Ascending aorta (tissue), 2 donors: ENCODE measurements at regions of chr9 and their contacts with region 1.

Region 1: DNA sequence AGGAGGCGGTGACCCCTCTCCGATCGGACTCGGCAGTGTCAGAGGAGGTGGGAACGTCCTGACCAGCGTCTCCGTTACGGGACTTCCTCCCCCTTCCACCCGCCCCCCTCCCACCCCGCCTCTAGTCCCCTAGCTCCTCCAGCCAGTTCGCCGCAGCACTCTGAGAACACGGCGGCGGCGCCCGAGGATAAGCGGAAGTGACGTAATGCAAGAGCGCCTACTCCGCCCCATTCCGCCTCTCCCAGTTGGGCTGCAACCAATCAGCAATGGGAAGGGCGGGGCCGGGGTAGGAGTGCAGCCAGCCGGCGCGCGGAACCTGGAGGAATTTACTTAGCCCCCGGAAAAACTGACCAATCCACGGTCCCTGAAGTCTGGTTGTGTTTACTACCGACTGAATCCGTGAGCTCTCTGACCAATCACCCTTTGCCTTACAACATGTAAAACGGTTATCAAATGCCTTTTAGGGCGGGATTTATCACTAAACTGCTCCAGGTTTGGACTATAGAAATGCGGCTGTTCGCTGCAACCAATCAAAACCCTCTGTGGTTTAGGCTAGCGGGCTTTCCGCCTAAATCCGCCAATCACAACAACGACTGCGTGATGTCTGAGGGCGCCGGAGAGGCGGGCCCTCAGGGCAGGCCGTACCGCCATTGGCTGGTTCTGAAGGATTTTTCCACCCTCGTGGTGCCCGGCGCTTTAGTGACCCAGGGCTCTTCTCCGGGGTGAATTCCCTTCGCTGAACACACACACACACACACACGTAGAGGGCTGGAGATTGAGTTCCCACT is at the start of gene ZBTB5:
- DNase-seq: peak; percentile 98 to 100
- H3K4me3 ChIP-seq: peak within 1 kb of the TSS; percentile 79 to 92
- H3K27ac ChIP-seq: peak within 1 kb of the TSS; percentile 97 to 99
- H3K4me1 ChIP-seq: peaks cover 4 to 27% of the 10 kb centered on the region in 2 donors
- H3K27me3 ChIP-seq: no peaks in the 10 kb centered on the region
- CTCF ChIP-seq: no peak
- total RNA-seq, gene ZBTB5: 3.4 TPM

Region 2: GRCh38 chr9:36903541-36904435 is 561.7 kb before region 1 on chr9:
- intact Hi-C with region 1: no loop called
- DNase-seq: no peak
- H3K4me3 ChIP-seq: no peak overlapping the region
- H3K27ac ChIP-seq: no peak overlapping the region
- H3K4me1 ChIP-seq: no peaks in the 10 kb centered on the region
- H3K27me3 ChIP-seq: no peaks in the 10 kb centered on the region
- CTCF ChIP-seq: no peak

Region 3: GRCh38 chr9:37079370-37080164 is 385.9 kb before region 1 on chr9:
- intact Hi-C with region 1: loop called (anchors 5 kb)
- DNase-seq: peak; percentile 74 to 96
- H3K4me3 ChIP-seq: peak overlapping the region; percentile 85 to 88
- H3K27ac ChIP-seq: peak overlapping the region; percentile 90 to 91
- H3K4me1 ChIP-seq: no peaks in the 10 kb centered on the region
- H3K27me3 ChIP-seq: no peaks in the 10 kb centered on the region
- CTCF ChIP-seq: no peak

Region 4: DNA sequence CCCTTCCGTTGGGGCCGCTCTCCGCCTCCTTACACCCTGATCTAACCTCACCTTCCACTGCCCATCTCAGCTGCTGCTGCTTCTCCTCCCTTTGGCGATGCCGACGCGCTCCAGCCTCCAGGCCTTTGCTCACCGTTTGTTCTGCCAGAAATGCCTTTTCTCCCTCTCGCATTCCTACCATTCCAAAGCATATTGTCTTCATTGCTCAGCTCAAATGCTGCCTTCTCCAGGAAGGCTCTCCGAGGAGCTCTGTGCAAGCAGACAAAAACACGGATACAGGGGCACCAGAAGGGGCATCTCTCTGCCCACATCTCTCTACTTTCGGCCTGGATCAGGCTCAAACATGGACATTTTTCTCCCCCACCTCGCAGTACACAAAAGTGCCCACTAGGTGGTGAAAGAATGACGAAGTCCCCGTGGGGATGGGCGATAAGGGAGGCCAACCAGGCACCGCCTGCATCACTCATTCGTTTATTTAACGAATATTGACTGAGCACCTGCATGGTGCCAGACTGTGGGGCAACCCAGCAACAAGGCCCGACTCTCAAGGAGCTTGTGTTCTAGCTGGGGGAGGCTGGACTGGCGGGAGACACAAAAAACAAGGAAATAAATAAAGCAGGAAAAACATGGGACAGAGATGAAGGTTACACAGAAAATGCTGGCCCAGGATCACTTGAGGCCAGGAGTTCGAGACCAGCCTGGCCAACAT is 50.3 kb before region 1 on chr9:
- intact Hi-C with region 1: loop called (anchors 2 kb)
- DNase-seq: peak in 1 of 2 donors; percentile 84
- H3K4me3 ChIP-seq: peak overlapping the region in 1 of 2 donors; percentile 43
- H3K27ac ChIP-seq: peak overlapping the region; percentile 39 to 50
- H3K4me1 ChIP-seq: no peaks in the 10 kb centered on the region
- H3K27me3 ChIP-seq: no peaks in the 10 kb centered on the region
- CTCF ChIP-seq: peak; percentile 65 to 86 (median 78)

Region 5: DNA sequence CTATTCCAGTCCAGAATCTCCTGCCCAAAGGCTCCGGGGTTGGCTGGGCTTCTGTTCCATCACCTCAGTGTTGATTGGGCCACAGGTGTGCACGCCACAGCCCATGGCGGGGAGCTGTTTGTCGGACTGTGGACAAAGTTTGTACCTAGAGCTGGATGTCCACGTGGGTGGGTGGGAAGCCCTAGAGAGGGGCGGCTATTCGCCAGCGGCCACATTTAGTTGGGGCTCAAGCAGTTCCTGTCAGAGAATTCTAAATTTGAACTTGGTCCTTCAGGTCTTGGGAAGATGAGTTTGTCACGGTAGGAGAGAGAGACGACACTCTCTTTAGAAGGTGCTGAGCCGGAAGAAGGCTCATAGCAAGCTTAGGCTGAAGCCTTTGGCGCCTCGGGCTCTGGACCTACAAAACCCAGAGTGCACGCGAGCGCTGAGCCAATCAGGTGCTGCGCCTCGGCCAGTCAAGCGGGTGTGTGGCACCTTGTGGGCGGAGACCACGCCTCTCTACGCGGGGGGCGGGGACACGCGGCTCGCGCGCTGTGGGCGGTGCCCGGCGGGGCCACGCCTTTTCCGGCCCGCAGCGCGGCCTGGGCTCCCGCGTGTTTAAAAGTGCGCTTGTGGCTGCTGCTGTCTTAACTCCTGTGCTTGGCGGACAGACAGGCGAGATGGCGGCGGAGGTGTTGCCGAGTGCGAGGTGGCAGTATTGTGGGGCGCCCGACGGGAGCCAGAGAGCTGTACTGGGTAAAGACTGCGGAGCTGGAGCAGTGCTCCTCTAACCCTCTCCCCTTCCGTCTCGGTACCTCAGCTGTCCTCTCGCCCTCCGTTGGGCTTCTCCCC is 20.2 kb after region 1 on chr9 and contains the start of gene POLR1E:
- intact Hi-C with region 1: loop called (anchors 1 kb)
- DNase-seq: peak; percentile 84 to 97
- H3K4me3 ChIP-seq: peak within 1 kb of the TSS; percentile 53 to 88
- H3K27ac ChIP-seq: peak within 1 kb of the TSS; percentile 88 to 94
- H3K4me1 ChIP-seq: peaks cover 12 to 19% of the 10 kb centered on the region in 2 donors
- H3K27me3 ChIP-seq: no peaks in the 10 kb centered on the region
- CTCF ChIP-seq: no peak
- total RNA-seq, gene POLR1E: 18.0 TPM

Region 6: DNA sequence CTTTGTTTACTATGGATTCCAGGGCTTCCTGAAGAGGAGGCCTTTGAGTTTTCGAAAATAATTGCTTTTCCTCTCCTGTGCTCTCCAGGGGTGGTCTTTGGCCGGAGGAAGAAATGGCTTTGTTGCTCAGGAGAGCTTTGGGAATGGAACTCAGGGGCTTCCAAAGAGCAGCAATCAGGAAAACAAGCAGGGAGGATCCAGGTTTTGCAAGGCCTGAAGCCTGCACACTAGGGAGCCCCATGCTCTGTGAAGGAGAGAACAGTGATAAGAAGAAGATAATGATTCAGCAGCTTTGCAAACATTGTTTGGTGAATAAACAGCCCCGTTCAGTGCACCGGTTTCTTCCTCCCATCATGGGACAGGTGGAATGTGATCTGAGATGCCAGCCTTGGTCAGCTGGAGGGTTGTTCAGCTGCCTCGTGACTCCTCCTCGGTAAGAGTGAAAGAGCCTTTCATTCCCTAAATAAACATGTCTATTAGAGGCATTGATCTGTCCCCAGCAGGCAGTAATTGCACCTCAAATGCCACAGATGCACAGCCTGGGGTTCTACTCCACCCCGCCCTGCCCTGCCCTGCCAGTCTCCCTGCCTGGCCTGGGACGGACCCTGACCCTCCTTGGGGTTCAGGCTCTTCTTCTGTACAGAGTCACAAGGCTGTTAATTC is 915.6 kb after region 1 on chr9:
- intact Hi-C with region 1: loop called (anchors 5 kb)
- DNase-seq: peak in 1 of 2 donors; percentile 57
- H3K4me3 ChIP-seq: no peak overlapping the region
- H3K27ac ChIP-seq: peak overlapping the region; percentile 98
- H3K4me1 ChIP-seq: peaks cover 7 to 50% of the 10 kb centered on the region in 2 donors
- H3K27me3 ChIP-seq: no peaks in the 10 kb centered on the region
- CTCF ChIP-seq: no peak